ENCODE measurements at regions of chr12 and their contacts with region 1.

Region 1: DNA sequence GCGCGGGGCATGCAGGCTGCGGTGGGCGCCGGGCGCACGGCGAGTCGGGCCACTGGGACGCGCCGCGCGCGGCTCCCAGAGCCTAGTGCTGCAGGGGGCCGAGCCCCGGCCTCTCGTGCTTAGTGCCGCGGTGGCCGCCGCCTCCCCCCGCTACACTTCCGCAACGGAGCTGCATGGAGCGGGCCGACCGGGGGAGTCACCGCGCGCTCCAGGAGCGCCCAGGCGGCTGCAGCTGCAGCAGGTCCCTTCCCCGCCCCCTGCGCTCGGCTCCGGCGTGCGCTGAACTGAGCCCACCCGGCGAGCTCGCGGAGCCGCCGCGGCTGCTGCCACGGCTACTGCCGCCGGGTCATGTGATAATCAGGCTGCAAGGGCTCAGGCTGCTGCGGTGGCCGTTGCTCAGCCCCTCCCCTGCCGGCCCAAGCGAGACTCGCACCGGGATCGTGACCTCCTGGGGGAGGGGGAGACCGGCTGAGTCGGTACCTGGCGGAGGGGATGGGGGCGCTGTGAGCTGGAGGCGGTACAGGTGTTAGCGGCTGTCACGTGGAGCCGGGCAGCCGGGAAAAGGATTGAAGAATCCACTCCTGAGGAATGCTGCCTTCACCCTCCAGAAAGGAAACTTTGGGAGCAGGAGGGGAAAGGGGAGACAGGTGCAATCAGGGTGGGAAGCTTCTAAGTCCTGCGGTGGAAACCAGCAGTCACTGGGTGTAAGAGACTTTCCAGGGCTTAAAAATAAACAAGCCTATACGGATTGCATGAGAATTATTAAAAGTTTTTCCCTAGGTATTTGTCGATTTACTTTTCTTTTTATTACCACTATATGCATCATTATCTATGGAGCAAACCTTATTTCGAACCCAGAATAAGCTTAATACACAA is at the start of gene PPM1H:
- DNase-seq: peak; percentile 58 to 83
- ATAC-seq: peak; percentile 83 to 91 (median 87)
- H3K4me3 ChIP-seq: peak within 1 kb of the TSS; percentile 89
- H3K27ac ChIP-seq: peak within 1 kb of the TSS; percentile 48
- H3K4me1 ChIP-seq: no peaks in the 10 kb centered on the region
- H3K27me3 ChIP-seq: peaks cover 0 to 3% (median 0%) of the 10 kb centered on the region in 3 donors
- CTCF ChIP-seq: peak; percentile 37
- total RNA-seq, gene PPM1H: 1.8 to 4.3 (median 3.1) TPM

Region 2: GRCh38 chr12:62813031-62813829 is 121.8 kb before region 1 on chr12:
- intact Hi-C with region 1: loop called in 1 of 2 experiments (anchors 10 kb)
- DNase-seq: peak; percentile 54 to 62
- ATAC-seq: peak in 3 of 4 donors; percentile 62 to 81 (median 73)
- H3K4me3 ChIP-seq: peak overlapping the region; percentile 26
- H3K27ac ChIP-seq: no peak overlapping the region
- H3K4me1 ChIP-seq: no peaks in the 10 kb centered on the region
- H3K27me3 ChIP-seq: no peaks in the 10 kb centered on the region
- CTCF ChIP-seq: peak; percentile 57

Region 3: DNA sequence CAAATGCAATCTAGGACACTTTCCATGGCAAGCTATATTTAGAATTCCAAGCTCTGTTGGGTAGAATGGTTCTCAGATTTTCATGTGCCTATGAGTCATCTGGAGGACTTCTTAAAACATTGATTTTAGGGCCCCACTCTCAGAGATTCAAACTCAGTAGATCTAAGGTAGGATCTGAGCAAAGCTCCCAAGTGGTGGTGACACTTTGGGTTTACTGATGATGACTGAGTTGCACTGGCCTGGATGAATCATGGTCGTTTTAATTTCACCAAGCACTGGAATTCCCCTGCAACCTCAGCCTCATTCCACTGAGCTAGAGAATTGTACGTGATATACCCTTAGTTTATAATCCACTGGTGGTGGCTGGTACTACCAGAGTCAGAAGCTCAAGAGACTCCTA is 86.6 kb before region 1 on chr12:
- intact Hi-C with region 1: loop called in 1 of 2 experiments (anchors 5 kb)
- DNase-seq: no peak
- ATAC-seq: peak; percentile 64 to 95 (median 84)
- H3K4me3 ChIP-seq: no peak overlapping the region
- H3K27ac ChIP-seq: peak overlapping the region; percentile 49
- H3K4me1 ChIP-seq: peaks cover 5% of the 10 kb centered on the region
- H3K27me3 ChIP-seq: no peaks in the 10 kb centered on the region
- CTCF ChIP-seq: no peak

Region 4: DNA sequence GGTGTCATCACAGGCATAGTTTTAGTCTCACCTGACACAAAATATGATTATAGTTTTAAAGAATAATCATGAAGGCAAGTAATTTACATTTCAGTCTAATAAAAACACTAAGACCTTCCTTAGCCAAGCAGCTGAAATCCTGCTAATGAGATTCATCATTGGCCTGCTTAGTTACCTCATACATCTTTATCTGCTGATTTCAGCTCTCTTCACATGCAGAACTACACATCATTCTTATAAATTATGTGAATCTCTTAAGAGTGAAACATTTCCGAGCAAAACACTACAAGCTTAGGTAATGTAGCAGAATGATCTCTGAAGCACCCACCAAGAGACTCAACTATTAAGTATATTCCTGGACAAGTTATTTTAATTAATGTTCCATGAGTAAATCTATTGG is 535.1 kb after region 1 on chr12:
- intact Hi-C with region 1: no loop called
- DNase-seq: no peak
- ATAC-seq: no peak
- H3K4me3 ChIP-seq: no peak overlapping the region
- H3K27ac ChIP-seq: no peak overlapping the region
- H3K4me1 ChIP-seq: no peaks in the 10 kb centered on the region
- H3K27me3 ChIP-seq: no peaks in the 10 kb centered on the region
- CTCF ChIP-seq: no peak